ENCODE measurements at regions of chr6 and their contacts with region 1.

Region 1: GRCh38 chr6:156776840-156777576 is at the start of gene ARID1B:
- DNase-seq: peak; percentile 74
- H3K4me3 Mint-ChIP-seq: peak within 1 kb of the TSS; percentile 95
- H3K27ac Mint-ChIP-seq: peak within 1 kb of the TSS; percentile 97
- H3K4me1 Mint-ChIP-seq: peaks cover 33% of the 10 kb centered on the region
- H3K27me3 Mint-ChIP-seq: no peaks in the 10 kb centered on the region
- total RNA-seq, gene ARID1B: 65.6 and 66.3 TPM in 2 replicates

Region 2: GRCh38 chr6:155314092-155314772 is 1462.8 kb before region 1 on chr6 and contains the start of gene TFB1M:
- intact Hi-C with region 1: loop called (anchors 2 kb)
- DNase-seq: peak; percentile 99
- H3K4me3 Mint-ChIP-seq: peak within 1 kb of the TSS; percentile 96
- H3K27ac Mint-ChIP-seq: peak within 1 kb of the TSS; percentile 93
- H3K4me1 Mint-ChIP-seq: peaks cover 36% of the 10 kb centered on the region
- H3K27me3 Mint-ChIP-seq: no peaks in the 10 kb centered on the region
- total RNA-seq, gene TFB1M: 32.5 and 39.8 TPM in 2 replicates

Region 3: GRCh38 chr6:156686995-156687788 is 89.8 kb before region 1 on chr6:
- intact Hi-C with region 1: loop called (anchors 1 kb)
- DNase-seq: peak; percentile 75
- H3K4me3 Mint-ChIP-seq: peak overlapping the region; percentile 84
- H3K27ac Mint-ChIP-seq: peak overlapping the region; percentile 73
- H3K4me1 Mint-ChIP-seq: peaks cover 29% of the 10 kb centered on the region
- H3K27me3 Mint-ChIP-seq: peaks cover 24% of the 10 kb centered on the region

Region 4: GRCh38 chr6:156933201-156934068 is 156.4 kb after region 1 on chr6:
- intact Hi-C with region 1: loop called (anchors 2 kb)
- DNase-seq: no peak
- H3K4me3 Mint-ChIP-seq: no peak overlapping the region
- H3K27ac Mint-ChIP-seq: peak overlapping the region; percentile 20
- H3K4me1 Mint-ChIP-seq: peaks cover 38% of the 10 kb centered on the region
- H3K27me3 Mint-ChIP-seq: no peaks in the 10 kb centered on the region

Region 5: DNA sequence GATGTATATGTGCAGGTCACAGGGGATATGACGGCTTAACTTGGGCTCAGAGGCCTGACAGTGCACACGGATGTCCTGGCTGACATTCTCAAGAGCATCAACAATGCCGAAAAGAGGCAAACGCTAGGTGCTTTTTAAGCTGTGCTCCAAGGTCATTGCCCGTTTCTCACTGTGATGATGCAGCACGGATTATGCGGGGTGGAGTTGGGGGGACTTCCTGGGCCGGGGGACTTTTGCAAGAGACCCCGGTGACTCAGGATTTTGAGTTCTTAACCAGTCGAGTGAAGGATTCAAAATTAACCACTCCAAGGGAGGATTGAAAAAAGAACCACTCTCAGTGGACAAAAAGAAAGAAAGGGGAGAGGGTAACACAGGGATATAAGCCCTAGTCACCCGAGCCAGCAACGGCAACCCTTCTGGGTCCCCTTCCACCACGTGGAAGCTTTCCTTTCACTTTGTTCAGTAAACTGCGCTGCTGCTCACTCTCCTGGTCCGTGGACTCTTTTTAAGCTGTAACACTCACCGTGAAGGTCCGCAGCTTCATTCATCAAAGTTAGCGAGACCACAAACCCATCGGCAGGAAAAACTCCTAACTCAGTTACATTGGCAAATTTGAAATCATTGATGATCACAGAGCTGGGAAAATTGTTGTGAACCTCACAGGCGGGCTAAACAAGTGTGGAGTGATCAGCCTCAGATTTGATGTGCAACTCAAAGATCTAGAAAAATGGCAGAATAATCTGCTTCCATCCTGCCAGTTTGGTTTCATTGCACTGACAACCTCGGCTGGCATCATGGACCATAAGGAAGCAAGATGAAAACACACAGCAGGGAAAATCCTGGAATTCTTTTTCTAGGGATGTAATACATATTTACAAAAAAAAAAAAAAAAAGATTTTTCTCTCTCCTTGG is 199.5 kb after region 1 on chr6:
- intact Hi-C with region 1: loop called (anchors 5 kb)
- DNase-seq: no peak
- H3K4me3 Mint-ChIP-seq: peak overlapping the region; percentile 74
- H3K27ac Mint-ChIP-seq: peak overlapping the region; percentile 83
- H3K4me1 Mint-ChIP-seq: peaks cover 50% of the 10 kb centered on the region
- H3K27me3 Mint-ChIP-seq: no peaks in the 10 kb centered on the region

Region 6: GRCh38 chr6:157274471-157275226 is 497.6 kb after region 1 on chr6:
- intact Hi-C with region 1: loop called (anchors 5 kb)
- DNase-seq: peak; percentile 78
- H3K4me3 Mint-ChIP-seq: peak overlapping the region; percentile 81
- H3K27ac Mint-ChIP-seq: peak overlapping the region; percentile 81
- H3K4me1 Mint-ChIP-seq: peaks cover 8% of the 10 kb centered on the region
- H3K27me3 Mint-ChIP-seq: peaks cover 5% of the 10 kb centered on the region